CD8-positive, alpha-beta T cell (primary cell): ENCODE measurements at regions of chr12 and their contacts with region 1.

Region 1: DNA sequence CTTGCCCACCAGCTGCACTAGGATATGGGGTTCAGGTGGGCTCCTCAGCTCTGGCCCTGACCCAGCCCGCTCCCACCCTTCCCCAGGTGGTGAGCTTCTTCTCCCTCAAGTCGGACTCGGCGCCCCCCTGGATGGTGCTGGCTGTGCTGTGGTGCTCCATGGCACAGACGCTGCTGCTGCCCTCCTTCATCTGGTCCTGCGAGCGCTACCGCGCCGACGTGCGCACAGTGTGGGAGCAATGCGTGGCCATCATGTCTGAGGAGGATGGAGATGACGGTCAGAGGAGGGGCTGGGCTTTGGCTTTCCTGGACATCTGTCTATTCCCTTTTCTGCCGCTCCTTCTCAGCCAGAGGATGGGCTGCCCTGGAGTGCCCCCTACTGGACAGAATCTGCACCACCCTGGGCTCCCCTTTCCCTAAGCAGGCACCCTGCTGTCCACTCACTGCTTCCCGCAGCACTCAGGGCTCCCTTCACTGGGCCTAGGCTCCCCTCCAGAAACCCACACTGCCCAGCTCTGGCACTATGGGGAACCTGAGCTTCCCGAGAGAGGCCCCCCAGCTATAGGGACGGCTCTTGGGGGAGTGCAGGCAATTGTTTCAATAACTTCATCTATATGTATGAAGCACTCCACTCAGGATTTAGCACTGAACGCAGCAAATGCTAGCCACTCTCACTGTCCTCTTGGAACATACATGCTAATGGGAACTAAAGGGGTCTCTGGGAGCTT is 2.6 kb upstream of the P3H3 start:
- DNase-seq: peak; percentile 59 to 86 (median 79)
- ATAC-seq: peak; percentile 63
- H3K4me3 ChIP-seq: no peak overlapping the region
- H3K4me3 Mint-ChIP-seq: peak overlapping the region; percentile 5
- H3K27ac ChIP-seq: no peak overlapping the region
- H3K27ac Mint-ChIP-seq: no peak overlapping the region
- H3K4me1 ChIP-seq: peaks cover 13% of the 10 kb centered on the region
- H3K4me1 Mint-ChIP-seq: peaks cover 32% of the 10 kb centered on the region
- H3K27me3 ChIP-seq: peaks cover 10 to 45% of the 10 kb centered on the region in 2 experiments
- H3K27me3 Mint-ChIP-seq: peaks cover 48% of the 10 kb centered on the region
- CTCF ChIP-seq: peak; percentile 71

Region 2: DNA sequence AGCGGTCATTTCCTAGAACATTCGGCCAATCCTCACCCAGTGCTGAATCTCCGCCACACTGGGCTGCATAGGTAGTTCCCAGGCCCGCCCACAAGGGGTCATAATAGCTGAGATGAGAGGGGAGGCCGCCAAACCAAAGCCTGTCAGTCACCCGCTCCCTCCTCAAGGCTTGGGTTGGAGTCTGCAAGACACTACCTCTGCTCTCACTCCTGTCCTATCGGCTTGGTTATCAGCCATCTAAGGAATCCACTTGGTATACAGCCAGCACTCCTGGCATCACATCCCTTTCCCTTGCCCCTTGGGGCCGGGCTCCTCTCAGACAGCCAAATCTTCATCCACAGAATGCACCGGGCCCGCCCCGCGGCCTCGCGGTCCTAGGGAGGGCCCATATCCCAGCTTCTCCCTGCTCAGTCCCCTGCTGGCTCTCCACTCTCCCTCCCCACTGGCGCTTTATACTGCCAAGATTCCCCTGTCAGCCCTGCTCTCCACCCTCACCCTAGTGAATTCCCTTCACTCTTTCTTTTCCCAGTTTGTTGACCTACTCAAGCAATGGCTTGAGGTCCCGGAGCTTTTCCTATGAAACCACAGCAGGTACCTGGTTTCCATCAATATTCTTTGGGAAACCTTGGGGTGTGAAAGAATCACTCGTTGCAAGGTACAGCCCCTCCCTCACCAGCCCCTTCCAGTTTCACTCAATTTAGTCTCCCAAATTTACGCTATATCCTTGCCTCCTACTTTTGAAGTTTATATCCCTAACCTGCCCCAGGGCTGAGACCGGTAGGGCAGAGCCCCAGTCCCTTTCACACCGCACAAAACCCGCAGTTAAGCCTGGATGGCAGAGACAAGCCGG is 271.2 kb before region 1 on chr12:
- CTCF ChIA-PET with region 1: interaction called, 5 read pairs
- POLR2A ChIA-PET with region 1: interaction called, 3 read pairs
- intact Hi-C with region 1: loop called in 1 of 2 experiments (anchors 5 kb)
- DNase-seq: peak; percentile 55 to 81 (median 71)
- ATAC-seq: peak; percentile 61
- H3K4me3 ChIP-seq: peak overlapping the region; percentile 70 to 96
- H3K4me3 Mint-ChIP-seq: peak overlapping the region; percentile 87
- H3K27ac ChIP-seq: no peak overlapping the region
- H3K27ac Mint-ChIP-seq: peak overlapping the region; percentile 58
- H3K4me1 ChIP-seq: peaks cover 35% of the 10 kb centered on the region
- H3K4me1 Mint-ChIP-seq: peaks cover 49% of the 10 kb centered on the region
- H3K27me3 ChIP-seq: no peaks in the 10 kb centered on the region
- H3K27me3 Mint-ChIP-seq: no peaks in the 10 kb centered on the region
- CTCF ChIP-seq: peak; percentile 50

Region 3: DNA sequence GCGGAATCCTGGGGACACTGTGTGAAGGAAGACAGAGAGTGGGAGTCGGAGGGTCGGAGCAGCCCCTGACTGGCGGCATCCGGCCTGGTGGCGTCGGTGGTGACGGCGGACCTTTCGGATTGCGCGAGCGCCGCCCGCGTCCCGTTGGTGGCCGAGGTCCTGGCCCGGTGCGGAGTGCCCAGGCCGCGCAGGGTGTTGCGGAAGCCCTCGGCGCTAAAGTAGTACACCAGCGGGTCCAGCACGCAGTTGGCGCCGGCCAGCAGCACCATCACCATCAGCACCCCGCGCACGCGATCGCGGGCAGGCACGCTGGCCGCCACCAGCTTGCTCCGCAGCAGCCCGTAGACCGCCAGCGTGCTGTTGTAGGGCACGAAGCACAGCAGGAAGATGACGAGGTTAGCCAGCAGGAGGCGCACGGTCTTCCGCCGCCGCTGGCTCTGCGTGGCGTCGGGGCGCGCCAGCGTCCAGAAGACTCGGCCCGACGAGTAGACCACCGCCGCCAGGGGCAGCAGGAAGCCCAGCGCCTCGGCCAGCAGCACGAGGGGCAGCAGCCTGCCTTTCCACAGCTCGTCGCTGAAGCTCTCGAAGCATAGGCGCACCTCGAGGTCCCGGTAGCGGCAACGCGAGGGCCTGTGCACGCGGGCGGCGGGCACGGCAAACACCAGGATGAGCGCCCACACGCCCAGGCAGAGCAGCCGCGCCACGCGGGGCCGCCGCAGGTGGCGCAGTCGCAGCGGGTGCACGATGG is 205.2 kb before region 1 on chr12:
- CTCF ChIA-PET with region 1: interaction called, 4 read pairs
- POLR2A ChIA-PET with region 1: no interaction called
- intact Hi-C with region 1: loop called in 1 of 2 experiments (anchors 2 kb)
- DNase-seq: peak in 7 of 9 experiments; percentile 21 to 78 (median 59)
- ATAC-seq: peak; percentile 72
- H3K4me3 ChIP-seq: peak overlapping the region; percentile 15 to 35
- H3K4me3 Mint-ChIP-seq: peak overlapping the region; percentile 73
- H3K27ac ChIP-seq: no peak overlapping the region
- H3K27ac Mint-ChIP-seq: peak overlapping the region; percentile 92
- H3K4me1 ChIP-seq: peaks cover 11% of the 10 kb centered on the region
- H3K4me1 Mint-ChIP-seq: peaks cover 39% of the 10 kb centered on the region
- H3K27me3 ChIP-seq: no peaks in the 10 kb centered on the region
- H3K27me3 Mint-ChIP-seq: no peaks in the 10 kb centered on the region
- CTCF ChIP-seq: peak; percentile 69

Region 4: DNA sequence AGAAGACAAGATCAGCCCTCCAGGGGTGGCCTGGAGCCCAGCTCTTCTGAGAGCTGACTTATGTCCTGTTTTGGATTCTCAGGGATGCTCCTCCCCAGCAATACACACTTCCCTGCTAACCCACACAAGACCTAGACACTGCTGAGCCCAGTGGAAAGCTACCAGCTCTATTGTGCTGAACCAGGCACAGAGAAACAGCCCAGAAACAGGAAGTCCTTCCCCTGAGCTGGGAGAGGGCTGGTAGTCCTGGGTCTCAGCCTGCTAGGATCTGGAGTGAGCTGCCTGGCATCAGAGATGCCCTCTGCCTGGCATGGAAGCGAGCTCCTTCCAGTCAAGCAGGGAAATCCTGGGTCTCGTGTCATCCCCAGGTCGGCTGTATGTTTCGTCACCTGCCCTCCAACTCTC is 54.5 kb before region 1 on chr12:
- CTCF ChIA-PET with region 1: interaction called, 10 read pairs
- POLR2A ChIA-PET with region 1: interaction called, 3 read pairs
- intact Hi-C with region 1: no loop called
- DNase-seq: no peak
- ATAC-seq: no peak
- H3K4me3 ChIP-seq: no peak overlapping the region
- H3K4me3 Mint-ChIP-seq: peak overlapping the region; percentile 49
- H3K27ac ChIP-seq: no peak overlapping the region
- H3K27ac Mint-ChIP-seq: no peak overlapping the region
- H3K4me1 ChIP-seq: peaks cover 43% of the 10 kb centered on the region
- H3K4me1 Mint-ChIP-seq: peaks cover 50% of the 10 kb centered on the region
- H3K27me3 ChIP-seq: peaks cover 0 to 8% of the 10 kb centered on the region in 2 experiments
- H3K27me3 Mint-ChIP-seq: peaks cover 40% of the 10 kb centered on the region
- CTCF ChIP-seq: no peak

Region 5: GRCh38 chr12:6799147-6799546 is 26.4 kb before region 1 on chr12:
- CTCF ChIA-PET with region 1: no interaction called
- POLR2A ChIA-PET with region 1: no interaction called
- intact Hi-C with region 1: no loop called
- DNase-seq: no peak
- ATAC-seq: no peak
- H3K4me3 ChIP-seq: no peak overlapping the region
- H3K4me3 Mint-ChIP-seq: no peak overlapping the region
- H3K27ac ChIP-seq: no peak overlapping the region
- H3K27ac Mint-ChIP-seq: no peak overlapping the region
- H3K4me1 ChIP-seq: no peaks in the 10 kb centered on the region
- H3K4me1 Mint-ChIP-seq: no peaks in the 10 kb centered on the region
- H3K27me3 ChIP-seq: peaks cover 0 to 2% of the 10 kb centered on the region in 2 experiments
- H3K27me3 Mint-ChIP-seq: peaks cover 8% of the 10 kb centered on the region
- CTCF ChIP-seq: no peak

Region 6: GRCh38 chr12:6813363-6813762 is 12.2 kb before region 1 on chr12:
- CTCF ChIA-PET with region 1: interaction called, 24 read pairs
- POLR2A ChIA-PET with region 1: no interaction called
- intact Hi-C with region 1: no loop called
- DNase-seq: no peak
- ATAC-seq: no peak
- H3K4me3 ChIP-seq: no peak overlapping the region
- H3K4me3 Mint-ChIP-seq: no peak overlapping the region
- H3K27ac ChIP-seq: no peak overlapping the region
- H3K27ac Mint-ChIP-seq: no peak overlapping the region
- H3K4me1 ChIP-seq: no peaks in the 10 kb centered on the region
- H3K4me1 Mint-ChIP-seq: no peaks in the 10 kb centered on the region
- H3K27me3 ChIP-seq: no peaks in the 10 kb centered on the region
- H3K27me3 Mint-ChIP-seq: peaks cover 4% of the 10 kb centered on the region
- CTCF ChIP-seq: no peak